T-cell (primary cell): ENCODE measurements at regions of chr11 and their contacts with region 1.

Region 1: DNA sequence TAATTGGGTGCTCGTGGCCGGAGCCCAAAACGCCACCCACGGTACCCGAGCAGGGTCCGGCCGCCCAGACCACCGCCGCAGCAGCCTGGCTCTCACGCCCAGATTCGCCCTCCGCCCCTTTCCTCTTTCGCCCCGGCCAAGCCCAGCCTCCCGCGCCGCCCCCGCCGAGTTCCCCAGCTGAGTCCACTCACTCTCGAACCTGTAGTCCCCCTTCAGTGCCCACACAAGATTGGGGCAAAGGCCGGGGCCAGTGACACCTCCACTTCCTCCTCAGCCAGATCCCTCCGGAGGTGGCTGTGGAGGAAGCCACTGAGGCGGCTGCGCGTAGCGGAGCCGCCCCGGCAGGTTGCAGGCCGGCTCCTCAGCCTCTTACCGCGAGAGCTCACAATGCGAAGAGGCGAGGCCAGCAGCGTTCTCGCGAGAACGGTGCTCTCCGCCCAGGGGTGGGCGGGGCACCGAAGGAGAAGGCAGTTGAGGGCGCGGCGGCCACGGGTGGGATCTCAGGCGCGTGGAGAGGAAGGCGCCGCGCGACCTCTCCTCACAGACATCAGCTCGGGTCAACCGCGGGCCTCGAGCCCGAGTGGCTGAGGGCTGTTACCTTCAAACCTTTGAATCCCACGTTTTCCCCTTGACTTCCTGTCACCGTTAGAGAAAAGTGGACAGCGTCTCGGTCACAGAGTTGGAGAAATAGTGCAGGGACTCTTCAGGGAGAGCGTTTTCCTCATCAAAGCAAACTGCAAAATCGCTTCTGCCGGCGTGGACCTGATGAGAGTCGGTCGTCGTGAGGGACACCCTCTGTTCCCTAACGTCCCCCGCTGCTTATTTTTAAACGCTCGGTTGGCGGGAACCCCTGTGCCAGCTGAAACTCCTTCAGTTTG is at the start of gene BTBD10:
- DNase-seq: peak; percentile 83 to 96 (median 92)
- ATAC-seq: peak; percentile 98 to 100 (median 99)
- H3K4me3 ChIP-seq: peak within 1 kb of the TSS; percentile 89 to 92
- H3K4me3 Mint-ChIP-seq: peak within 1 kb of the TSS; percentile 98 to 100 (median 99)
- H3K27ac ChIP-seq: peak within 1 kb of the TSS; percentile 82
- H3K27ac Mint-ChIP-seq: peak within 1 kb of the TSS; percentile 96 to 99
- H3K4me1 ChIP-seq: peaks cover 9 to 12% of the 10 kb centered on the region in 2 experiments
- H3K4me1 Mint-ChIP-seq: peaks cover 46 to 51% (median 48%) of the 10 kb centered on the region in 3 donors
- H3K27me3 ChIP-seq: no peaks in the 10 kb centered on the region
- H3K27me3 Mint-ChIP-seq: no peaks in the 10 kb centered on the region
- total RNA-seq, gene BTBD10: 15.9 to 19.3 (median 18.8) TPM

Region 2: GRCh38 chr11:12377106-12377823 is 1085.9 kb before region 1 on chr11 and contains the start of gene PARVA:
- CTCF ChIA-PET with region 1: interaction called in 1 of 2 experiments, 11 read pairs
- POLR2A ChIA-PET with region 1: no interaction called
- DNase-seq: peak in 1 of 35 experiments; percentile 12
- ATAC-seq: peak in 3 of 4 experiments; percentile 26 to 38 (median 31)
- H3K4me3 ChIP-seq: peak within 1 kb of the TSS; percentile 43 to 62
- H3K4me3 Mint-ChIP-seq: peak within 1 kb of the TSS; percentile 70 to 78 (median 77)
- H3K27ac ChIP-seq: peak within 1 kb of the TSS; percentile 12
- H3K27ac Mint-ChIP-seq: peak within 1 kb of the TSS; percentile 25 to 66
- H3K4me1 ChIP-seq: peaks cover 2 to 13% of the 10 kb centered on the region in 2 experiments
- H3K4me1 Mint-ChIP-seq: peaks cover 11 to 15% (median 13%) of the 10 kb centered on the region in 3 donors
- H3K27me3 ChIP-seq: peaks cover 21 to 24% of the 10 kb centered on the region in 2 experiments
- H3K27me3 Mint-ChIP-seq: peaks cover 19 to 34% of the 10 kb centered on the region in 2 donors
- total RNA-seq, gene PARVA: 0.41 to 0.93 (median 0.75) TPM

Region 3: DNA sequence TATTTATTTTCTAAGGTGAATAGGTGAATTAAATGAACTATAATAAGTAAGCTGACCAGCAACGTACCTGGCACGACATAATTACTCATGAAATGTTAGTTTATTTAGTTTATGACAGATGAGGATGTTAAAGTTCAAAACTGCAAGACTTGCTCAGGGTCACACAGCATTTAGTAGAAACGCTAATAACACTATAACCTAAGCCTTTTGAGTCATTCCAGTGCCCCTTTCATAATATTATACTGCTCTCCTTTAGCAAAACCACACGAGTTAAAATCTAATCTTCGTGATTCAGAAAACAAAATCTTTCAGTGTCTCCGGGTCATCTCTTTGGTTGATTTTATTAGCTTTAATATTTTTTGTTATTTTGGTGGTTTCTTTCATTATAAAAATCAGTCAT is 39.8 kb before region 1 on chr11:
- CTCF ChIA-PET with region 1: no interaction called
- POLR2A ChIA-PET with region 1: no interaction called
- DNase-seq: no peak
- ATAC-seq: no peak
- H3K4me3 ChIP-seq: no peak overlapping the region
- H3K4me3 Mint-ChIP-seq: no peak overlapping the region
- H3K27ac ChIP-seq: no peak overlapping the region
- H3K27ac Mint-ChIP-seq: no peak overlapping the region
- H3K4me1 ChIP-seq: no peaks in the 10 kb centered on the region
- H3K4me1 Mint-ChIP-seq: peaks cover 25 to 41% (median 34%) of the 10 kb centered on the region in 3 donors
- H3K27me3 ChIP-seq: no peaks in the 10 kb centered on the region
- H3K27me3 Mint-ChIP-seq: no peaks in the 10 kb centered on the region